PC-3 (cell line): ENCODE measurements at regions of chr4 and their contacts with region 1.

Region 1: DNA sequence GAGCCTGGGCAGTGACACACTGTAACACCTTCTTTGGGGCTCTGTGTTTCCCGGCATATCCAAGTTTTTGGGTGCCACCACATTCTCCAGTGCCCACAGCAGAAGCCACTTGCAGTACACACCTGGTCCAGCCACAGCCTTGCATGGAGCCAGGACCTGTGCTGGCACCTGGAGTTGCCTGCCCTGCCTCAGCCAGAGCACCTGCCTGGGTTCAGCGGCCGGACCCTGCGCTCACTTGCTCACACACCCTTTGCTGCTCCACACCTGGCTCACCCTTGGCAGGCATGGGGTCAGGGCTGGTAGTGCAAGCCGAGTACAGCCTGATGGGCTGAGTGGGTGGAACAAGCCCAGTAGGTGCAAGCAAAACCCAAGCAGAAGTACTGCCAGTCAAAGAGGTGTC is 1511.1 kb downstream of the TECRL start:
- DNase-seq: no peak
- ATAC-seq: no peak
- H3K4me3 ChIP-seq: no peak overlapping the region
- H3K27ac ChIP-seq: no peak overlapping the region
- H3K4me1 ChIP-seq: peaks cover 5% of the 10 kb centered on the region; the same call in 1 of the 2 replicates
- H3K27me3 ChIP-seq: no peaks in the 10 kb centered on the region
- CTCF ChIP-seq: no peak

Region 2: GRCh38 chr4:62359441-62360155 is 538.5 kb before region 1 on chr4:
- CTCF ChIA-PET with region 1: no interaction called
- POLR2A ChIA-PET with region 1: no interaction called
- intact Hi-C with region 1: no loop called
- DNase-seq: no peak
- ATAC-seq: no peak; the same call in 1 of the 2 replicates
- H3K4me3 ChIP-seq: no peak overlapping the region
- H3K27ac ChIP-seq: no peak overlapping the region
- H3K4me1 ChIP-seq: no peaks in the 10 kb centered on the region
- H3K27me3 ChIP-seq: no peaks in the 10 kb centered on the region
- CTCF ChIP-seq: no peak

Region 3: GRCh38 chr4:62377700-62378099 is 520.4 kb before region 1 on chr4:
- CTCF ChIA-PET with region 1: no interaction called
- POLR2A ChIA-PET with region 1: no interaction called
- intact Hi-C with region 1: no loop called
- DNase-seq: no peak
- ATAC-seq: no peak
- H3K4me3 ChIP-seq: no peak overlapping the region
- H3K27ac ChIP-seq: no peak overlapping the region
- H3K4me1 ChIP-seq: peaks cover 12% of the 10 kb centered on the region
- H3K27me3 ChIP-seq: no peaks in the 10 kb centered on the region
- CTCF ChIP-seq: no peak

Region 4: DNA sequence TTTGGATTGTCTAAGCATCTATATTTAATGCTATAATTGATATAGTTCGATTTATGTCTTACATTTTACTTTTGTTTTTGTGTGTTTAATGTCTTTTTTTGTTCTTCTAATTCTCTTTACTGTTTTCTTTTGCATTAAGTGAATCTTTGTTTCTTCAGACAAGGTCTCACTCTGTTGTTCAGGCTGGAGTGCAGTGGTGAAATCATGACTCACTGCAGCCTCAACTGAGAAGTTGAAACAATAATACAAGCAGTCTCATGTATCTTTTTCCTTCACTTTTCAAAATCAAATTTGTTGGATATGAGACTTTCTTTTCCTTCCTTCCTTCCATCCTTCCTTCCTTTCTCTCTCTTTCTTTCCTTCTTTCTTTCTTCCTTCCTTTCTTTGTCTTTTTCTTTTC is 296.4 kb before region 1 on chr4:
- CTCF ChIA-PET with region 1: no interaction called
- POLR2A ChIA-PET with region 1: no interaction called
- intact Hi-C with region 1: no loop called
- DNase-seq: peak; percentile 37
- ATAC-seq: peak; percentile 65; the same call in 1 of the 2 replicates
- H3K4me3 ChIP-seq: peak overlapping the region; percentile 37; the same call in 1 of the 2 replicates
- H3K27ac ChIP-seq: 0 out of 2 replicates have a peak overlapping the region, but pooled peaks have one; percentile 17
- H3K4me1 ChIP-seq: peaks cover 6% of the 10 kb centered on the region
- H3K27me3 ChIP-seq: no peaks in the 10 kb centered on the region
- CTCF ChIP-seq: no peak

Region 5: GRCh38 chr4:62740296-62740695 is 157.8 kb before region 1 on chr4:
- CTCF ChIA-PET with region 1: no interaction called
- POLR2A ChIA-PET with region 1: no interaction called
- intact Hi-C with region 1: no loop called
- DNase-seq: no peak
- ATAC-seq: no peak
- H3K4me3 ChIP-seq: no peak overlapping the region
- H3K27ac ChIP-seq: no peak overlapping the region
- H3K4me1 ChIP-seq: no peaks in the 10 kb centered on the region
- H3K27me3 ChIP-seq: no peaks in the 10 kb centered on the region
- CTCF ChIP-seq: no peak

Region 6: DNA sequence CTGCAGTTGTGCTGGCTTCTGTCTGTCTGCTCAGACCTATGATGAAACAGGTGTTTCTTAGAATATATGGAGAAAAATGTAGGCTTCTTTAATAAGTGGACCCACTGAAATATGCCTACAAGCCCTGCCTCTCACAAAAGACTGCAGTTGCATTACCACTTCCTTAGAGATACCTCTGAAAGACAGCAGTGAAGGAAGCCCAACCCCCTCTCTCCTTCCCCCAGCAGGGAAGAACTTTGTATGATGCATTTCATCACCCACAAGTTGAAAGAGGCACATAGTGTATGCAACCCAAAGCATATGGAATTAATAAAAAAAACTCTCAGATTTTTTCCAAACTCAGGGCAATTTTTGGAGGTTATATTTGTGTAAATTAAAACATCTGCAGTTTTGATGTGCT is 594.4 kb after region 1 on chr4:
- CTCF ChIA-PET with region 1: no interaction called
- POLR2A ChIA-PET with region 1: no interaction called
- intact Hi-C with region 1: loop called (anchors 10 kb)
- DNase-seq: no peak
- ATAC-seq: no peak
- H3K4me3 ChIP-seq: no peak overlapping the region
- H3K27ac ChIP-seq: no peak overlapping the region
- H3K4me1 ChIP-seq: no peaks in the 10 kb centered on the region
- H3K27me3 ChIP-seq: no peaks in the 10 kb centered on the region
- CTCF ChIP-seq: no peak